A549 (cell line): ENCODE measurements at regions of chr12 and their contacts with region 1.

Region 1: GRCh38 chr12:69359531-69360347 is at the start of gene YEATS4:
- DNase-seq: peak; percentile 95 to 96
- ATAC-seq: peak; percentile 91 to 94
- H3K4me3 ChIP-seq: peak within 1 kb of the TSS; percentile 83
- H3K27ac ChIP-seq: peak within 1 kb of the TSS; percentile 94 to 96
- H3K4me1 ChIP-seq: peaks cover 14% of the 10 kb centered on the region
- CTCF ChIP-seq: no peak
- EP300 ChIP-seq: no peak
- POLR2A ChIP-seq: peak; percentile 87
- RAD21 ChIP-seq: no peak
- polyA plus RNA-seq, gene YEATS4: 43.4 and 70.1 TPM in 2 replicates

Region 2: GRCh38 chr12:69343357-69343756 is 16.4 kb before region 1 on chr12:
- CTCF ChIA-PET with region 1: interaction called, 17 read pairs
- POLR2A ChIA-PET with region 1: no interaction called
- DNase-seq: no peak
- ATAC-seq: no peak; a peak in 1 of 6 replicates
- H3K4me3 ChIP-seq: no peak overlapping the region
- H3K27ac ChIP-seq: no peak overlapping the region
- H3K4me1 ChIP-seq: no peaks in the 10 kb centered on the region
- CTCF ChIP-seq: no peak
- EP300 ChIP-seq: no peak
- POLR2A ChIP-seq: no peak
- RAD21 ChIP-seq: no peak

Region 3: GRCh38 chr12:69648481-69648880 is 288.7 kb after region 1 on chr12:
- CTCF ChIA-PET with region 1: interaction called, 17 read pairs
- POLR2A ChIA-PET with region 1: no interaction called
- DNase-seq: peak in 1 of 2 experiments; percentile 57
- ATAC-seq: peak; percentile 83 to 86
- H3K4me3 ChIP-seq: no peak overlapping the region
- H3K27ac ChIP-seq: no peak overlapping the region
- H3K4me1 ChIP-seq: peaks cover 9% of the 10 kb centered on the region; the same call in 1 of the 3 replicates
- CTCF ChIP-seq: no peak
- EP300 ChIP-seq: no peak
- POLR2A ChIP-seq: no peak
- RAD21 ChIP-seq: no peak